ENCODE measurements at regions of chr3 and their contacts with region 1.

Region 1: GRCh38 chr3:138915503-138916498 is 31.1 kb downstream of the FOXL2 start:
- DNase-seq: peak; percentile 95

Region 2: GRCh38 chr3:138389841-138390586 is 525.8 kb before region 1 on chr3:
- in situ Hi-C with region 1: no loop called
- DNase-seq: no peak

Region 3: GRCh38 chr3:138594150-138594934 is 321.5 kb before region 1 on chr3 and contains the start of gene CEP70:
- in situ Hi-C with region 1: loop called (anchors 25 kb)
- DNase-seq: peak; percentile 97

Region 4: DNA sequence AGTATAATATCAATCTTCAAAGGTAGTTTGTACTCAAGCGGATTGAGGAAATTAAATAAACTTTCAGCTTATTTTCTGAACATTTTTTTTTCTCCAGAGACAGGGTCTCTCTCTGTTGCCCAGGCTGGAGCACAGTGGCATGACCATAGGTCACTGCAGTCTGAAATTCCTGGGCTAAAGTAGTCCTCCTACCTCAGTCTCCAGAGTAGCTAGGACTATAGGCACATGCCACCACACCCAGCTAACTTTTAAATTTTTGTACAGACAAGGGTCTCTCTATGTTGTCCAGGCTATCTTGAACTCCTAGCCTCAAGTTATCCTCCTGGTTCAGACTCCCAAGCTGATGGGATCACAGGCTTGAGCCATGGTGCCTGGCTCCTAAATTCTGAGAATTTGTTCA is 210.1 kb before region 1 on chr3:
- in situ Hi-C with region 1: loop called (anchors 10 kb)
- DNase-seq: no peak

Region 5: DNA sequence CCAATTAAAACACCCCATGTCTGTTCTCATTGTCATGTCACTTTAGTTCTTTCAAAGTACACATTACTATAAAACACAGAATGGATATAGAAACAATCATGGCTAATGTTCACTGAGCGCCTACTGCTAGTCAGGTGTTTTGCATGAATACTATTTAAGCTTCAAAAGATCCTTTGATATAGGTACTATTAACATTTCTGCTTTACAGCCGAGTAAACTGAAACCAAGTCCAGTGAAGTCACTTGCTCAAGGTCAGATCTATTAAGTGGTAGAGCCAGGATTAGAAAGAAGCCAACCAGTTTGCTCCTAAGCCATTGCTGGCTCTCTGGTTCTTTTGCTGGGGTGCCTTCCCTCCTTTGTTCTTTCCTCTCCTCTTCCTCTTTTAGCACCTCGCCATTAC is 794.4 kb after region 1 on chr3:
- in situ Hi-C with region 1: no loop called
- DNase-seq: no peak

Measured in KBM-7 (cell line).